CD4-positive, alpha-beta memory T cell (primary cell): ENCODE measurements at regions of chr14 and their contacts with region 1.

Region 1: DNA sequence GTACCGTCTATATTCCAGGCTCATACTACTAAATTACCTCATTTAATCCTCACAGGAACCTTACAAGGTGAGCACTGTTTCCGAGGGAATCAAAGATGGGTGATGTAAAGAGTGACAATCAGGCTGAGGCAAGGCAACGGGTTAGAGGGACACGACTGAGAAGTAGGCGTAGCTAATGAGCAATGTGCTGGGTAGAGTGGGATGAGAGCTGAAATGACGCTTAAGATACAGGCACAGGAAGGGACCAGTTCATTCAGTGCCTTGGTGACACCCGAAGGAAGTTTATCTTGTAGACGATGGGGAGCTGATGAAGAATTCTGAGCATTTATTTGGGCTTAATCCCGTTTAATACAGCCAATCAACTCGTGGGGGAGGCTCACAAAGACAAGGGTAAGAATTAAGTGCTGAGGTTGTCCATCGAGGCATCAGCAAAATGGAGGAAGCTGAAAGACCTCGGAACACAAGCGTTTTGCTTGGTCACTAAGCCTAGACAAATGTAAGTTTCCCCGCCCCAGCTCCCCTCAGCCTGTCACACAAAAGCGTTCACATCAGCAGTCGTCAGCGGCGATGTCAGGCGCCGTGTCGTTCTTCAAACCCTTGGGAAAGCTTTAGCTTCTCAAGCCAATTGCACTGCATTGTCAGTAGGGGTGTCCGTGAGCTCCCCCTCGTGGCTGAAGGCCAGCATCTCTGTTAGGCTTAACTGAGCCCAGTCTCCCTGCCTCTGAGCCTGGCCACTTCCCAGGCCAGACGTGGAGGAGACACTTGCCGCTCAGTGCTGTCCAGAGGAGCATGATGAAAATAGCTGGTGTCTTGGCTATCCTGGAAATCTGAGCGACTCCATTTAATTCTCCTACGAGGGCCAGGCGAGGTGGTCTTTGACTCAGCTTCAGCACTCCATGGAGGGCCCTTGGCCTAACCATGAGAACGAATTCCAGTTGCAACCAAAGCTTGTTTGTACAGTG is 288.5 kb upstream of the G2E3 start:
- DNase-seq: peak; percentile 15 to 36 (median 26)
- H3K4me3 ChIP-seq: no peak overlapping the region
- H3K4me3 Mint-ChIP-seq: peak overlapping the region in 7 of 8 donors; percentile 9 to 70 (median 60)
- H3K27ac ChIP-seq: no peak overlapping the region
- H3K27ac Mint-ChIP-seq: no peak overlapping the region
- H3K4me1 ChIP-seq: no peaks in the 10 kb centered on the region
- H3K4me1 Mint-ChIP-seq: peaks cover 0 to 9% (median 2%) of the 10 kb centered on the region in 4 donors
- H3K27me3 ChIP-seq: no peaks in the 10 kb centered on the region
- H3K27me3 Mint-ChIP-seq: peaks cover 0 to 3% of the 10 kb centered on the region in 2 donors

Region 2: DNA sequence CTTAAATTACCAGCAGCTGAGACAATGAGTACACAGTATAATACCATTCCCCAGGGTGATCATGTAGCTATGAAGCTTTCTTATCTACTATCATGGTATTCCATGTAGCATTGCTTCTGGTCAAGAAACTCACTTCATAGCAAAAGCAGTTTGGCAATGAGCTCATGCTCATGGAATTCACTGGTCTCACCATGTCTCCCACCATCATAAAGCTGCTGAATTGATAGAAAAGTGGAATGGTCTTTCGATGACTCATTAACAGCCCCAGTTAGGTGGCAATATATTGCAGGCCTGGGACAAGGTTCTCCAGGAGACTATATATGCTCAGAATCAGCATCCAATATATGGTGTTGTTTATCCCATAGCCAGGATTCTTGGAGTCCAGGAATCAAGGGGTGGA is 950.2 kb before region 1 on chr14:
- CTCF ChIA-PET with region 1: no interaction called
- POLR2A ChIA-PET with region 1: no interaction called
- intact Hi-C with region 1: no loop called
- DNase-seq: no peak
- H3K4me3 ChIP-seq: no peak overlapping the region
- H3K4me3 Mint-ChIP-seq: no peak overlapping the region
- H3K27ac ChIP-seq: no peak overlapping the region
- H3K27ac Mint-ChIP-seq: no peak overlapping the region
- H3K4me1 ChIP-seq: no peaks in the 10 kb centered on the region
- H3K4me1 Mint-ChIP-seq: no peaks in the 10 kb centered on the region
- H3K27me3 ChIP-seq: no peaks in the 10 kb centered on the region
- H3K27me3 Mint-ChIP-seq: peaks cover 0 to 1% of the 10 kb centered on the region in 2 donors

Region 3: DNA sequence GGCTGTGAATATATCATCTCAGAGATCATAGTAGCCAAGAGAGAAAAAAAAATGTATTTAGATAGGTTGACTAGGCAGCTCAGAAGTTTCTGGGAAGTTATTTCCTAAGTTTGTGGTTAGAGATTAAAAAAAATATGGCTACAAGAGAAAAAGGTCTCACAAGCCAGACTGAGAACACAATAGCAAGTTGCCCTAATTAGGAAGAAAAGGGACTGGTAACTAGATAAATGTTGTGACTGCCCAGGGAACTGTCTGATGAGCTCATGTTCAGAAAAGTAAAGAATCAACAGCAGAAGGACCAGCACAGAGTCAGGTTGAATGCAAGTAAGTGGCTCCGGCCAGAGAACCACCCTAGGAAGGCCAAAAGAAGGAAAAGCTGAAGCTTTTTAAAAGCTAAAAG is 599.4 kb before region 1 on chr14:
- CTCF ChIA-PET with region 1: no interaction called
- POLR2A ChIA-PET with region 1: no interaction called
- intact Hi-C with region 1: no loop called
- DNase-seq: no peak
- H3K4me3 ChIP-seq: no peak overlapping the region
- H3K4me3 Mint-ChIP-seq: no peak overlapping the region
- H3K27ac ChIP-seq: no peak overlapping the region
- H3K27ac Mint-ChIP-seq: no peak overlapping the region
- H3K4me1 ChIP-seq: no peaks in the 10 kb centered on the region
- H3K4me1 Mint-ChIP-seq: no peaks in the 10 kb centered on the region
- H3K27me3 ChIP-seq: no peaks in the 10 kb centered on the region
- H3K27me3 Mint-ChIP-seq: no peaks in the 10 kb centered on the region

Region 4: GRCh38 chr14:29971101-29971500 is 299.4 kb before region 1 on chr14:
- CTCF ChIA-PET with region 1: no interaction called
- POLR2A ChIA-PET with region 1: no interaction called
- intact Hi-C with region 1: no loop called
- DNase-seq: no peak
- H3K4me3 ChIP-seq: no peak overlapping the region
- H3K4me3 Mint-ChIP-seq: peak overlapping the region in 1 of 8 donors; percentile 16
- H3K27ac ChIP-seq: no peak overlapping the region
- H3K27ac Mint-ChIP-seq: no peak overlapping the region
- H3K4me1 ChIP-seq: no peaks in the 10 kb centered on the region
- H3K4me1 Mint-ChIP-seq: no peaks in the 10 kb centered on the region
- H3K27me3 ChIP-seq: no peaks in the 10 kb centered on the region
- H3K27me3 Mint-ChIP-seq: no peaks in the 10 kb centered on the region

Region 5: GRCh38 chr14:30257946-30258657 is 12.4 kb before region 1 on chr14:
- CTCF ChIA-PET with region 1: interaction called, 13 read pairs
- POLR2A ChIA-PET with region 1: no interaction called
- intact Hi-C with region 1: no loop called
- DNase-seq: no peak
- H3K4me3 ChIP-seq: no peak overlapping the region
- H3K4me3 Mint-ChIP-seq: no peak overlapping the region
- H3K27ac ChIP-seq: no peak overlapping the region
- H3K27ac Mint-ChIP-seq: no peak overlapping the region
- H3K4me1 ChIP-seq: no peaks in the 10 kb centered on the region
- H3K4me1 Mint-ChIP-seq: no peaks in the 10 kb centered on the region
- H3K27me3 ChIP-seq: no peaks in the 10 kb centered on the region
- H3K27me3 Mint-ChIP-seq: peaks cover 0 to 1% of the 10 kb centered on the region in 2 donors

Region 6: GRCh38 chr14:30283826-30284446 is 13.5 kb after region 1 on chr14:
- CTCF ChIA-PET with region 1: interaction called, 22 read pairs
- POLR2A ChIA-PET with region 1: no interaction called
- intact Hi-C with region 1: no loop called
- DNase-seq: no peak
- H3K4me3 ChIP-seq: no peak overlapping the region
- H3K4me3 Mint-ChIP-seq: no peak overlapping the region
- H3K27ac ChIP-seq: no peak overlapping the region
- H3K27ac Mint-ChIP-seq: no peak overlapping the region
- H3K4me1 ChIP-seq: no peaks in the 10 kb centered on the region
- H3K4me1 Mint-ChIP-seq: no peaks in the 10 kb centered on the region
- H3K27me3 ChIP-seq: no peaks in the 10 kb centered on the region
- H3K27me3 Mint-ChIP-seq: peaks cover 0 to 3% of the 10 kb centered on the region in 2 donors

Region 7: DNA sequence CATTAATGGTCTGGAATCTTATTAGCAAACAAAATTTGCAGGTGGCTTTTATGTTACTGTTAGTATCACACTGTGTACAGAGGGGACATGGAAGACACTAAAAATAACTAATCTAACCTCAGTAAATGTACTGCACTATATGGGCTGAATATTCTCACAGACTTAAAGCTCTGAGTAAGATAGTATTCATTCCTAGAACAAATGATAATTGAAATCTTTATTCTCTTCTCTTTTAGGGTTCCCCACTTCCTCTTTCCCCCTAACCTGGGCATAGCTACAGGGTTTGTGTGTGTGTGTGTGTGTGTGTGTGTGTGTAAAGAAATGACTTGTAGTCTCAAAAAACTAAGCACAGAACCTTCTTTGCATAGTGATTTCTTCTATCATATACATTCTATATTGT is 958.5 kb after region 1 on chr14:
- CTCF ChIA-PET with region 1: no interaction called
- POLR2A ChIA-PET with region 1: no interaction called
- intact Hi-C with region 1: no loop called
- DNase-seq: no peak
- H3K4me3 ChIP-seq: no peak overlapping the region
- H3K4me3 Mint-ChIP-seq: no peak overlapping the region
- H3K27ac ChIP-seq: no peak overlapping the region
- H3K27ac Mint-ChIP-seq: peak overlapping the region in 1 of 7 donors; percentile 58
- H3K4me1 ChIP-seq: no peaks in the 10 kb centered on the region
- H3K4me1 Mint-ChIP-seq: no peaks in the 10 kb centered on the region
- H3K27me3 ChIP-seq: no peaks in the 10 kb centered on the region
- H3K27me3 Mint-ChIP-seq: no peaks in the 10 kb centered on the region